ENCODE measurements at regions of chr3 and their contacts with region 1.

Region 1: GRCh38 chr3:12663936-12664908 is at the start of gene RAF1:
- DNase-seq: peak; percentile 97 to 98 (median 98)
- H3K4me3 ChIP-seq: peak within 1 kb of the TSS; percentile 93 to 99
- H3K4me3 Mint-ChIP-seq: peak within 1 kb of the TSS; percentile 88 to 100 (median 98)
- H3K27ac ChIP-seq: peak within 1 kb of the TSS; percentile 95
- H3K27ac Mint-ChIP-seq: peak within 1 kb of the TSS; percentile 98 to 99 (median 99)
- H3K4me1 ChIP-seq: peaks cover 40% of the 10 kb centered on the region
- H3K4me1 Mint-ChIP-seq: peaks cover 20 to 48% (median 29%) of the 10 kb centered on the region in 4 donors
- H3K27me3 ChIP-seq: no peaks in the 10 kb centered on the region
- H3K27me3 Mint-ChIP-seq: no peaks in the 10 kb centered on the region
- total RNA-seq, gene RAF1: 116 to 120 TPM

Region 2: DNA sequence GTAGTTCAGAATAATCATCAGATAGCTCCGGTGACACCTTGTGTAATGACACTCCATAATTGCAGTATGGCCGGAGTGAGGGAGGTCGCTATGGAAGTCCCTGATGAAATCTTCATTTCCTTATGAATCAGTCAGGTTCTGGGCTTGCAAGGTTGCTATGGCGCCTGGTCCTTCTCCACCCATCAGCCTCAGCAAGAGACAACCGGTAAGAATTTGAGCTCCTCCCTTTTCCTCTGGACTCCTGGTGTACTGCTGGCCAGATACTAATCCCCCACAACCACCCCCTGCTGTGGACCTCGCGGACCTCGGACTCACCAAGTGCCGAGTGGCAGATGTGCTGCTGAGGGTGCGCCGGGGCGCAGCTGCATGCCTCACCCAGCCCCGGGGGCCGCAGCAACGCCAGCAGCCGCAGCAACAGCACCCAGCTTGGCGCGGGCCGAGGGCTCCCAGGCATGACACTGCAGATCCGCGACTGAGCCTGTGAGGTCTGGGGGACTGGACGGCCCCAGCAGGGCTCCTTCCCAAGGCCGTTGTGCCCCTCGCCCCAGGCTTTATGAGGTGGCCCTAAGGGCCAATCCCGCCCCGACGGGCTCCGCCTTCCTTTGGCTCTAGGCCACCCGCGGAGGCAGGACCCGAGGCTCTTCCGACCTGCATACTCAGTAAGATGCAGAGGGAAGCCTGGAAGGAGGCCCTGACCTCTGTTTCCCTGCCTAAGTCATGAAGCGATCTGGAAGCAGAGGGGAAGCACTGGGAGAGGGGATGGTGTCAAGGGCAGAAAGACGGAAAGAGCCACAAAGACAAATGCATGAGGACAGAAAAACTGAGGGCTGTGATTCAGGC is 505.6 kb before region 1 on chr3 and contains the start of gene TIMP4:
- CTCF ChIA-PET with region 1: no interaction called
- POLR2A ChIA-PET with region 1: no interaction called
- intact Hi-C with region 1: no loop called
- DNase-seq: no peak
- H3K4me3 ChIP-seq: no peak within 1 kb of the TSS
- H3K4me3 Mint-ChIP-seq: peak within 1 kb of the TSS in 1 of 8 donors; percentile 5
- H3K27ac ChIP-seq: no peak within 1 kb of the TSS
- H3K27ac Mint-ChIP-seq: no peak within 1 kb of the TSS
- H3K4me1 ChIP-seq: no peaks in the 10 kb centered on the region
- H3K4me1 Mint-ChIP-seq: peaks cover 0 to 2% (median 0%) of the 10 kb centered on the region in 4 donors
- H3K27me3 ChIP-seq: no peaks in the 10 kb centered on the region
- H3K27me3 Mint-ChIP-seq: peaks cover 4 to 12% of the 10 kb centered on the region in 2 donors
- total RNA-seq, gene TIMP4: not detected

Region 3: GRCh38 chr3:12370758-12371157 is 293.5 kb before region 1 on chr3:
- CTCF ChIA-PET with region 1: no interaction called
- POLR2A ChIA-PET with region 1: no interaction called
- intact Hi-C with region 1: no loop called
- DNase-seq: no peak
- H3K4me3 ChIP-seq: no peak overlapping the region
- H3K4me3 Mint-ChIP-seq: no peak overlapping the region
- H3K27ac ChIP-seq: no peak overlapping the region
- H3K27ac Mint-ChIP-seq: no peak overlapping the region
- H3K4me1 ChIP-seq: no peaks in the 10 kb centered on the region
- H3K4me1 Mint-ChIP-seq: no peaks in the 10 kb centered on the region
- H3K27me3 ChIP-seq: no peaks in the 10 kb centered on the region
- H3K27me3 Mint-ChIP-seq: peaks cover 7 to 13% of the 10 kb centered on the region in 2 donors

Region 4: DNA sequence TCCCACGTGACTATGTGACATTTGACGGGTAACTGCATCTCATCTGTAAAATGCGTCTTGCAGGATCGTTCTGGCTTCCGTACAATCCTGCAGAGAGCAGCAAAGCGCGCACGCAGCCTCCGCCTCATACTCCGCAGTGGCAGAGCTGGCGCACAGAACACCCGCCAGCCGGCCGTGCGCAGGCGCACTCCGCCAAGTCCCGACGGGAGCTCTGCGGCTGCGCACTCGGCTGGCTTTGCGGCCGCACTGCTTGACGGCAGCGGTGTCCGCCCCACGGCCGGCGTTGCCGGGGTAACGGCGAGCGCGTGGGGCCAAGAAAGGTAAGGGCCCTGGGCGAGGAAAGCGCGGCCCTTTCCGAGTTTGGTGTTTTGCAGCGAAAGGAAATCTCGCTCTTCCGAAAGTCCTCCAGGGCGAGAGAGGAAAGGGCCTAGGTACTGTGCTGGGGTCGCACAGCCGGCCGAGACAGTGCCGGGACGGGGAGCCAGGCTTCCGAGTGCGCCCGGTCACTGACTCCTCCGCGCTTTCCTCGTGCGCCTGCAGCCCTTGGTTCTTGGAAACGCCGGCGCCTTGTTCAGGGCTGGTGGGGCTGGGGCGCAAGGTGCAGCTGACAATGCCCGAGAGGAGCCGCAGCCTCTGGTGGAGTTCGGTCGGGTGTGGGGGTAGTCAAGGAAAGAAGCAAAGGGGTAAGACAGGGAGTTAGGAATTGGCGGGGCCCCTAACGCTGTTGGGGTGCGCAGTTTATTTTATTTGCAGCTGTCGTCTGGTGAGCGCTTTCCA is 179.8 kb before region 1 on chr3 and contains the start of gene TSEN2:
- CTCF ChIA-PET with region 1: interaction called, 3 read pairs
- POLR2A ChIA-PET with region 1: interaction called, 29 read pairs
- intact Hi-C with region 1: loop called (anchors 2 kb)
- DNase-seq: peak; percentile 96 to 100 (median 98)
- H3K4me3 ChIP-seq: peak within 1 kb of the TSS; percentile 78 to 83
- H3K4me3 Mint-ChIP-seq: peak within 1 kb of the TSS; percentile 90 to 98 (median 96)
- H3K27ac ChIP-seq: peak within 1 kb of the TSS; percentile 81
- H3K27ac Mint-ChIP-seq: peak within 1 kb of the TSS; percentile 96 to 99 (median 97)
- H3K4me1 ChIP-seq: peaks cover 28% of the 10 kb centered on the region
- H3K4me1 Mint-ChIP-seq: peaks cover 19 to 43% (median 34%) of the 10 kb centered on the region in 4 donors
- H3K27me3 ChIP-seq: no peaks in the 10 kb centered on the region
- H3K27me3 Mint-ChIP-seq: no peaks in the 10 kb centered on the region
- total RNA-seq, gene TSEN2: 18.5 to 19.6 TPM

Region 5: DNA sequence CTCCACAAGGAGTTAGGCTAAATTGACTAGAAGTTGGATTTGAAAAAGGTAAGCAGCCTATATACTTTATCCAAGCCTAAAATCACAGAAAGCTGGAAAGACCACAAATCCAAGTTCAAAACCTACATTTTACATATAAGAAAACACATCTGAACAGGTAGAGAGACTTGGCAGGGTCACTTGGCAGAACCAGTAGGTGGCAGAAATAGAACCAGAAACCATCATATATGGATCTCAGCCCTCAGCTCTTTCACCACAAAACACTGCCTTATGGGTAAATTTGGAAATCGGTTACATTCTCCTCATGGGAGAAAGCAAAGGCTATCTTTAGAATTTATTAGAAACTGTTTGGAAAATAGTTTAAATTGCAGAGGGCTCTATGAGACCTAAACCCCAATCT is 63.1 kb before region 1 on chr3:
- CTCF ChIA-PET with region 1: no interaction called
- POLR2A ChIA-PET with region 1: interaction called, 16 read pairs
- intact Hi-C with region 1: loop called (anchors 10 kb)
- DNase-seq: no peak
- H3K4me3 ChIP-seq: no peak overlapping the region
- H3K4me3 Mint-ChIP-seq: no peak overlapping the region
- H3K27ac ChIP-seq: no peak overlapping the region
- H3K27ac Mint-ChIP-seq: peak overlapping the region in 2 of 7 donors; percentile 24 to 37
- H3K4me1 ChIP-seq: no peaks in the 10 kb centered on the region
- H3K4me1 Mint-ChIP-seq: peaks cover 0 to 3% (median 0%) of the 10 kb centered on the region in 4 donors
- H3K27me3 ChIP-seq: no peaks in the 10 kb centered on the region
- H3K27me3 Mint-ChIP-seq: no peaks in the 10 kb centered on the region

Region 6: DNA sequence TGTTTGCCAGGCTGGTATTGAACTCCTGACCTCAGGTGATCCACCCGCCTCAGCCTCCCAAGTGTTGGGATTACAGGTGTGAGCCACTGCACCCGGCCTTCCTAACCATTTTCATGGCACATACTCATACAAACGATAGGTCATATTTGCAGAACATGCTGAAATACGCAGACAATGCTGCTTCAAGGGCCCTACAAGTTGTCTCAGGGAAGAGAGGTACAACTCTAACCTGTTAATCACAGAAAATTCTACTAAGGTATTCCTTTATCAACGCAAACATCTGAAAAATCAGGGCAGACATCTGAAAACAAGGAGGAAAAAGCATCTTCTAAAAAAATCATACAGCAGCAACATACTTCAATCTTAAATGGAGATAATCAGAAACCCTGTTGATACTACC is 40.2 kb before region 1 on chr3:
- CTCF ChIA-PET with region 1: no interaction called
- POLR2A ChIA-PET with region 1: interaction called, 11 read pairs
- intact Hi-C with region 1: loop called (anchors 5 kb)
- DNase-seq: no peak
- H3K4me3 ChIP-seq: no peak overlapping the region
- H3K4me3 Mint-ChIP-seq: peak overlapping the region in 3 of 8 donors; percentile 23 to 67 (median 48)
- H3K27ac ChIP-seq: no peak overlapping the region
- H3K27ac Mint-ChIP-seq: peak overlapping the region in 5 of 7 donors; percentile 0 to 76 (median 54)
- H3K4me1 ChIP-seq: peaks cover 51% of the 10 kb centered on the region
- H3K4me1 Mint-ChIP-seq: peaks cover 36 to 70% (median 52%) of the 10 kb centered on the region in 4 donors
- H3K27me3 ChIP-seq: no peaks in the 10 kb centered on the region
- H3K27me3 Mint-ChIP-seq: no peaks in the 10 kb centered on the region

Region 7: GRCh38 chr3:12719984-12720898 is 56.0 kb after region 1 on chr3:
- CTCF ChIA-PET with region 1: no interaction called
- POLR2A ChIA-PET with region 1: no interaction called
- intact Hi-C with region 1: loop called (anchors 1 kb)
- DNase-seq: peak; percentile 75 to 83 (median 78)
- H3K4me3 ChIP-seq: peak overlapping the region in 1 of 2 donors; percentile 22
- H3K4me3 Mint-ChIP-seq: peak overlapping the region; percentile 58 to 82 (median 74)
- H3K27ac ChIP-seq: no peak overlapping the region
- H3K27ac Mint-ChIP-seq: peak overlapping the region; percentile 57 to 95 (median 92)
- H3K4me1 ChIP-seq: peaks cover 5% of the 10 kb centered on the region
- H3K4me1 Mint-ChIP-seq: peaks cover 9 to 15% (median 10%) of the 10 kb centered on the region in 4 donors
- H3K27me3 ChIP-seq: no peaks in the 10 kb centered on the region
- H3K27me3 Mint-ChIP-seq: no peaks in the 10 kb centered on the region

Region 8: DNA sequence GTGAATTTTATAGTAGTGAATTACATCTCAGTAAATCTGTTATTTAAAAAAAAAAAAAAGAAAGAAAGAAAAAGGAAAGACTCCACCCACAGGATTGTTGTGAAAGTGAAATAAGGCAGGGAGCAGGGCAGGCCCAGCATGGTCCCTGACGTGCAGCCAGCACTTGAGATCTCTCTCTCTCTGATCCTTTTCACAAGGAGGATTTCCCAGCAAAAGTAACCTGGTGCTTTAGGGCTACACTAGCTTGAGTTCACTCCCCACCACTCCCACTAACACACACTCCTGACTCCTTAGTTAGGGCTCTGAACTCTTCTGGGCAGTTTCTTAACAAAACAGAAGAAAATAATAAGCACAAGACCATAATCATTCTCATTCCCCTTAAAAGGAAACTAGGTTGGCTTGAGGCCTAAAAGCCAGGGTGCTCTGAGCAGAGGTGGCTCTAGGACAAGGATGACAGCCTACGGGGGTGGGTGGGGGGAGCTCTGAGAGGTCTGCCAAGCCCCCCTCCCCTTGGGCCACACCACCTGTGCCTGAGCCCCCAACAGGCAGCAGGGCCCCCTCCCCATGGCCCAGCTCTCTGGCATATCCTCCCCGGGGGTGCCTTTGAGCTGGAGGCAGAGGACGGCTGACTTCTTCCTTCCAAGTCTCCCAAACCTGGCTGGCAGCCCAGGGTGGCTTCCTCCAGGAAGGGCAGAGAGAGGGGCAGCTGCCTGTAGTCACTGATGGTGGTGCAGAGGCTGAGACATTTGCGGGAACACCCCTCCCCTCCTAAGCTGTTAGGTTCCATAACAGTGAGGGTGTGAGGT is 94.0 kb after region 1 on chr3:
- CTCF ChIA-PET with region 1: no interaction called
- POLR2A ChIA-PET with region 1: no interaction called
- intact Hi-C with region 1: no loop called
- DNase-seq: no peak
- H3K4me3 ChIP-seq: no peak overlapping the region
- H3K4me3 Mint-ChIP-seq: no peak overlapping the region
- H3K27ac ChIP-seq: no peak overlapping the region
- H3K27ac Mint-ChIP-seq: peak overlapping the region in 1 of 7 donors; percentile 84
- H3K4me1 ChIP-seq: peaks cover 3% of the 10 kb centered on the region
- H3K4me1 Mint-ChIP-seq: peaks cover 5 to 7% (median 6%) of the 10 kb centered on the region in 4 donors
- H3K27me3 ChIP-seq: no peaks in the 10 kb centered on the region
- H3K27me3 Mint-ChIP-seq: peaks cover 5 to 7% of the 10 kb centered on the region in 2 donors

Region 9: DNA sequence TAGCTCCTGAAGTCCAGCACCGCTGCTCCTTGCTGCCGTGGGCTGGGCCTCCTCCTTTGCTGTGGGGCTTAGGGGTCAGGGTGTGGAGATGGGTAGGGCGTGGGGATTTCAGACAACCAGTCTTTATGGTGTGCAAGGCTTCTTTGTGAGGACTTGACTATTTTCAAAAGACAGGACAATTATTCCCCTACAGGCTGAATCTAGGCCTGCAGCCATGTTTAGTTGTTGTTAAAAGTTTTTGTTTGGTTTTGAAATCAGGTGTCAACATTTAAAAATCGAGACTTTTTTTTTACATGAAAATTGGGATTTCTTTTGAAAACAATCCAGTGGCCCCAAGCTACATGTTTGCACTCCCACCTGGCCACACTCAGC is 166.5 kb after region 1 on chr3:
- CTCF ChIA-PET with region 1: no interaction called
- POLR2A ChIA-PET with region 1: no interaction called
- intact Hi-C with region 1: no loop called
- DNase-seq: no peak
- H3K4me3 ChIP-seq: no peak overlapping the region
- H3K4me3 Mint-ChIP-seq: no peak overlapping the region
- H3K27ac ChIP-seq: no peak overlapping the region
- H3K27ac Mint-ChIP-seq: peak overlapping the region in 2 of 7 donors; percentile 11 to 68
- H3K4me1 ChIP-seq: no peaks in the 10 kb centered on the region
- H3K4me1 Mint-ChIP-seq: peaks cover 0 to 3% (median 0%) of the 10 kb centered on the region in 4 donors
- H3K27me3 ChIP-seq: no peaks in the 10 kb centered on the region
- H3K27me3 Mint-ChIP-seq: no peaks in the 10 kb centered on the region